Mammary epithelial cell (primary cell): ENCODE measurements at regions of chr17 and their contacts with region 1.

Region 1: GRCh38 chr17:7136266-7136877 is 21.8 kb upstream of the ASGR2 start:
- DNase-seq: peak; percentile 36
- H3K4me3 ChIP-seq: no peak overlapping the region
- H3K27ac ChIP-seq: no peak overlapping the region
- H3K4me1 ChIP-seq: no peaks in the 10 kb centered on the region
- H3K27me3 ChIP-seq: no peaks in the 10 kb centered on the region
- CTCF ChIP-seq: peak; percentile 90 to 93

Region 2: DNA sequence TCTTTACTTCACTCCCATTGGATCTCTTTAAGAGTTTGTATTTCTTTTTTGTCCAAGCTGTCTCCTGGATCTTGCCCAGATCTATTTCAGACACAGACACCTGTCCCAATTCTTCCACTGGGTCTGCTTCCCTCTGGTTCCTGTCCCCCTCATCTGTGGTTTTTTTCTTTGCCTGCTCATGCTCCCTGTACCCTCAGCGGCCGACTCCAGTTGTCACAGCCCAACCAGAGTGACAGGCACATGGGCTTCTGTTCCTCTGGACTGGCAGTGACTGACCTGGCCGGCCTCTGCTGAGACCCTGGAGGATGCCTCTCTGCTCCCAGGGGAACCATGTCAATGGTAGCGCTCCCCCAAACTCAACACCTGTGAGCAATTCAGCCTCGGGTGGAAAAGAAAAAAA is 923.6 kb before region 1 on chr17:
- CTCF ChIA-PET with region 1: no interaction called
- dilution Hi-C with region 1: no loop called
- in situ Hi-C with region 1: no loop called
- intact Hi-C with region 1: no loop called
- DNase-seq: no peak
- H3K4me3 ChIP-seq: no peak overlapping the region
- H3K27ac ChIP-seq: no peak overlapping the region
- H3K4me1 ChIP-seq: no peaks in the 10 kb centered on the region
- H3K27me3 ChIP-seq: peaks cover 20% of the 10 kb centered on the region
- CTCF ChIP-seq: no peak

Region 3: GRCh38 chr17:6913608-6914443 is 222.5 kb before region 1 on chr17:
- CTCF ChIA-PET with region 1: no interaction called
- dilution Hi-C with region 1: no loop called
- in situ Hi-C with region 1: no loop called
- intact Hi-C with region 1: loop called (anchors 2 kb)
- DNase-seq: no peak
- H3K4me3 ChIP-seq: no peak overlapping the region
- H3K27ac ChIP-seq: no peak overlapping the region
- H3K4me1 ChIP-seq: no peaks in the 10 kb centered on the region
- H3K27me3 ChIP-seq: no peaks in the 10 kb centered on the region
- CTCF ChIP-seq: peak; percentile 43 to 70

Region 4: DNA sequence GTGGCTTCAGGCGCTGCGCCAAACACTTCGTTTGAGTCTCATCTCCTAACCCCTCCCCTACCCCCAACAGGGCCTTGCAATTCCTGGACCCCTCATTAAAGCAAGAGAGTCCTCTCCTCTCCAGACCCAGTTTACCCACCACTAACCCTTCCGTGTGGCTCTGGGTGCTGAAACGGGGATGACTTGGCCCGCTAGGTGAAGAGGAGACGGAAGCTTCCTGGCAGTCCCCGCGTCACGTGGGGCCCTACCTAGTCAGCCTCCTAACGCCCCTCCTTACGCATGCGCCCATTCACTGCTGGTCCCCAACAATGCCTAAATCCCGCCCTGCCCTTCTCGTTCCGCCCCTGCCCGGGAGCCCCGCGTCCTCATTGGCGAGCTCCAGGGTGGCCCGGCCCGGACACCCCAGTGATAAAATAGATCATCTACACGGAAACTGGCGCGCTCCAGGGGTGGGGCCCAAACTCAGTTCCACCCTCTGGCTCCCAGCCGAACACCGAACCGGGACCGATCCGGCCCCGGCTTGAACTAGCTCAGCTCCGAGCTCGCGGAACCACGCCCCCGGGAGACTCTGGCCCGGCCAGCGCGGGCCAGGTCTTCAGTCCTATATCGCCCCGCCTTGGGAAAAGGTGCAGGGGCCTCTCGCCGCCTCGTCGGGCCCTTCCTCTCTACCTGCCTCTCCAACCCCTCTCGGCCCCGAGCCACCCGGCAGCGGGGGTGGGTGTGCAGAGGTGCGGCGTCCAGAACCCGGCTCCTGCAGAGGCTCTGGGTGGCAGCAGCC is 100.6 kb before region 1 on chr17 and contains the start of gene SLC16A13:
- CTCF ChIA-PET with region 1: no interaction called
- dilution Hi-C with region 1: loop called (anchors 5 kb)
- in situ Hi-C with region 1: no loop called
- intact Hi-C with region 1: no loop called
- DNase-seq: peak; percentile 99
- H3K4me3 ChIP-seq: peak within 1 kb of the TSS; percentile 65 to 71 (median 70)
- H3K27ac ChIP-seq: peak within 1 kb of the TSS; percentile 81
- H3K4me1 ChIP-seq: peaks cover 12% of the 10 kb centered on the region
- H3K27me3 ChIP-seq: no peaks in the 10 kb centered on the region
- CTCF ChIP-seq: no peak
- total RNA-seq, gene SLC16A13: 2.7 to 11.9 TPM

Region 5: DNA sequence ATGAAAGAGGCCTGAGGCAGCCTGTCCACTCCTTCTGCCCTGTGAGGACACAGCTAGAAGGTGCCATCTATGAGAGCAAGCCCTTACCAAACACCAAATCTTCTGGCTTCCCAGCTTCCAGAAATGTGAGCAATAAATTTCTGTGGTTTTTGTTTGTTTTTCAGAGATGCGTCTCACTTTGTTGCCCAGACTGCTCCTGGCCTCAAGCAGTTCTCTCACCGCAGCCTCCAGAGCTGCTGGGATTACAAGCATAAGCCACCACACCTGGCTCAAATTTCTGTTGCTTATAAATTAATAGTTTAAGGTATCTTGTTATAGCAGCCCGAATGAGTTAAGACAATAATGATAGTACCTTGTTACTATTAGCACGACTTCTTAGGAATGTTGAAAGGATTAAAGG is 80.0 kb before region 1 on chr17:
- CTCF ChIA-PET with region 1: interaction called, 4 read pairs
- dilution Hi-C with region 1: no loop called
- in situ Hi-C with region 1: loop called (anchors 5 kb)
- intact Hi-C with region 1: loop called (anchors 1 kb)
- DNase-seq: peak; percentile 86
- H3K4me3 ChIP-seq: no peak overlapping the region
- H3K27ac ChIP-seq: no peak overlapping the region
- H3K4me1 ChIP-seq: peaks cover 23% of the 10 kb centered on the region
- H3K27me3 ChIP-seq: no peaks in the 10 kb centered on the region
- CTCF ChIP-seq: no peak

Region 6: DNA sequence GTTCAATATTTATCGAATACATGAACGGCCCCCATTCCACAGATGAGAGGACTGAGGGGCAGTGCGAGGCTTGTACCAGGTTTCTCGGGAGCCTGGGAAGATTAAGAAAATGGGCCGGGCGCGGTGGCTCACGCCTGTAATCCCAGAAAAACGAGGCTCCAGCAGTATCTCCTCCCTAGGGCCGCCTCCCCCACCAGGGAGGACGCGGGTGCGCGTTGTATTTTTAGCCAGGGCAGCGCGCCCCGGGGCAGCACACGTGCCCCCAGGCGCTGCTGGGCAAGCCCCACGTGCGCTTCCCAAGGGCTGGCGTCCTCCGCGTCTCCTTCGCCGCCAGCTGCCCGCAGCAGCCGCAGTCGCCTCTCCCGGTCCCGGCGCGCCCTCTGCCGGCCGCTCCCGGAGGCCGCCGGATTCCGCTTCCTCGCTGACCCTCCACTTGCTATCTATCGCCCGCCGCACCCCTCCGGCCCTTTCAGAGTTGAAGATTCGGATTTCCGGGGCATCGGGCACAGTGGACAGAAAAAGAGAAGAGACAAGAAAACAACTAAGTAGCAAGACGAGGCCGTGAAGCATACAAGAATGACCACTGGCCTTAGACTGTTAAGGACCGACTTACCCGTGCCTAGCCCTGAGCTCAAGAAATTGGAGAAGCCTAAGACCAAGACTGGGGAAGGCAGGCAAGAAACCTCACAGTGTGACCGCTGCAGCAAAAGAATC is 160.0 kb after region 1 on chr17:
- CTCF ChIA-PET with region 1: no interaction called
- dilution Hi-C with region 1: no loop called
- in situ Hi-C with region 1: no loop called
- intact Hi-C with region 1: loop called (anchors 2 kb)
- DNase-seq: peak; percentile 69
- H3K4me3 ChIP-seq: no peak overlapping the region
- H3K27ac ChIP-seq: no peak overlapping the region
- H3K4me1 ChIP-seq: peaks cover 5% of the 10 kb centered on the region
- H3K27me3 ChIP-seq: no peaks in the 10 kb centered on the region
- CTCF ChIP-seq: peak; percentile 59 to 93

Region 7: DNA sequence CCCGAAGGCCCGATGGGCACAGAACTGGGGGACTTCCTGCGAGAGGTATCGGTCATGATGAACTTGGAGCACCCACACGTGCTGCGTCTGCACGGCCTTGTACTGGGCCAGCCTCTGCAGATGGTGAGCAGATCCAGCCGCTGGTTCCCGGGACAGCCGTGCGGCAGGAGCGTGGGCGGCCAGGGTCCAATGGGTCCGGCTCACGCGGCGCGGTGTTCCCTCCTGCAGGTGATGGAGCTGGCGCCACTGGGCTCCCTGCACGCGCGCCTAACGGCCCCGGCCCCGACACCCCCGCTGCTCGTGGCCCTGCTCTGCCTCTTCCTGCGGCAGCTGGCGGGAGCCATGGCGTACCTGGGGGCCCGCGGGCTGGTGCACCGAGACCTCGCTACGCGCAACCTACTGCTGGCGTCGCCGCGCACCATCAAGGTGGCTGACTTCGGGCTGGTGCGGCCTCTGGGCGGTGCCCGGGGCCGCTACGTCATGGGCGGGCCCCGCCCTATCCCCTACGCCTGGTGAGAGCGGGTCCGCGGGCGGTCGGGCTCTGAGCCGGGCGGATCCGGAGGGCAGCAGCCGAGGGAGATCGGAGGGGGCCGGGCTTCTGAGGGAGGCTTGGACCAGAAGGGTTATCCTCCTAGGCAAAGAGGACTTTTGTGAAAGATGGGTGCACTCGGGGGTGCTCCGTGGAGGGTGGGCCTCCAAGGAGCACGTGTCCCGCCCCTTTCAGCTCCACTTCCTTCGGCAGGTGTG is 247.5 kb after region 1 on chr17:
- CTCF ChIA-PET with region 1: no interaction called
- dilution Hi-C with region 1: no loop called
- in situ Hi-C with region 1: no loop called
- intact Hi-C with region 1: no loop called
- DNase-seq: no peak
- H3K4me3 ChIP-seq: no peak overlapping the region
- H3K27ac ChIP-seq: no peak overlapping the region
- H3K4me1 ChIP-seq: peaks cover 7% of the 10 kb centered on the region
- H3K27me3 ChIP-seq: no peaks in the 10 kb centered on the region
- CTCF ChIP-seq: no peak